Ovary (tissue), 10 donors: ENCODE measurements at regions of chr22 and their contacts with region 1.

Region 1: GRCh38 chr22:23457355-23458068 is 122.6 kb downstream of the IGLL1 start:
- DNase-seq: peak in 1 of 5 donors; percentile 45
- H3K4me3 ChIP-seq: no peak overlapping the region
- H3K27ac ChIP-seq: peak overlapping the region in 1 of 2 donors; percentile 76
- H3K4me1 ChIP-seq: peaks cover 14% of the 10 kb centered on the region
- H3K27me3 ChIP-seq: no peaks in the 10 kb centered on the region
- CTCF ChIP-seq: no peak
- EP300 ChIP-seq: no peak
- POLR2A ChIP-seq: no peak

Region 2: GRCh38 chr22:23509571-23510305 is 52.2 kb after region 1 on chr22:
- intact Hi-C with region 1: loop called in 1 of 4 experiments (anchors 10 kb)
- DNase-seq: peak in 3 of 5 donors; percentile 33 to 52 (median 45)
- H3K4me3 ChIP-seq: no peak overlapping the region
- H3K27ac ChIP-seq: peak overlapping the region in 1 of 2 donors; percentile 33
- H3K4me1 ChIP-seq: peaks cover 2% of the 10 kb centered on the region
- H3K27me3 ChIP-seq: no peaks in the 10 kb centered on the region
- CTCF ChIP-seq: no peak
- EP300 ChIP-seq: no peak
- POLR2A ChIP-seq: no peak